WTC11 (cell line): ENCODE measurements at regions of chr1 and their contacts with region 1.

Region 1: DNA sequence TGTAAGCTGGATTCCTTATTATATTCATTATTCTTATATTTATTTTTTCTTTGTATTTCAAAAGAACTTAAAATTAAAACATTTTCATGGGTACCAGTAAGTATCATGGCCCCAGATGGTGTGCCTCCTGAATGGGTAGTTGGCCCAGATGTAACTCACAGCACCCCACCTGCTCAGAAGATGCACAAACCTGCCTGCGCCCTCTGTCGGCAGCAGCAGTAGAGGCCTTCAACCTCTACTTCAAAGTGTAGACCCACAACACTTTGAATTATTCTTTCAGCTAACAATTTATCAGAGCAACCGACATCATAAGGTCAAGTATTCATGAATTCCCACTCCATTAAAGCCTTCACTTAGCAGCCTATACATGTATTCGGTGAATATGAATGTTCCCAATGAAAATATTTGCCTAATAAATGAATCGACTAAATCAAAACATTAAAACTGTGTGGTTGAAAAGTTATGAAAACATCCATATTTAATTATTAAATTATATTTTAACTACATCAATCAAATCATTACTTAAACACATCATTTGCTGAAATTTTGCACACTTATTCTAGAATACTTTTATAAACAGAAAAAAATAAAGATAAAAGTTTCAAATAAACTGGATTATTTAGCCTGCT is 25.4 kb downstream of the PIGM start:
- DNase-seq: peak; percentile 86
- ATAC-seq: peak; percentile 95
- H3K4me3 Mint-ChIP-seq: no peak overlapping the region
- H3K27ac Mint-ChIP-seq: no peak overlapping the region
- H3K4me1 Mint-ChIP-seq: no peaks in the 10 kb centered on the region
- H3K27me3 Mint-ChIP-seq: peaks cover 8% of the 10 kb centered on the region; the same call in 1 of the 2 replicates
- CTCF ChIP-seq: peak; percentile 93

Region 2: DNA sequence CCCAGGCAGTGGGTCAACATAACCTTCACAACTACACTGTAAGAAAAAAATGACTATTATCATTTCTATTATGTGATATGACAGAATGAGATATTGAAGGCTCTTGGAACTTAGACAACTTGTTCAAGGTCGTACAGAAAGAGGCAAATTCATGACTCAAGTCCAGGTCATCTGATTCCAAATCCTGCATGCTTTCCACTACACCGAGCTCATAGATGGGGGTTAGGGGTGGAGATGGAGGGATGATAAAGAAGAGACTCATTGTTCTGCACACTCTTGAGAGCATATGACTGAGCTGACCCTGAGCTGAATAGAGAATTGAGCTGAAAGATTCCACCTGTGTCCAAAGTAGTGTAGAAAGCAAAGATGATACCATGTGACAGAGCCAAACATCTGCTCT is 201.5 kb before region 1 on chr1:
- CTCF ChIA-PET with region 1: interaction called, 77 read pairs
- POLR2A ChIA-PET with region 1: no interaction called
- DNase-seq: no peak
- ATAC-seq: no peak
- H3K4me3 Mint-ChIP-seq: no peak overlapping the region
- H3K27ac Mint-ChIP-seq: no peak overlapping the region
- H3K4me1 Mint-ChIP-seq: no peaks in the 10 kb centered on the region
- H3K27me3 Mint-ChIP-seq: peaks cover 6% of the 10 kb centered on the region
- CTCF ChIP-seq: no peak

Region 3: DNA sequence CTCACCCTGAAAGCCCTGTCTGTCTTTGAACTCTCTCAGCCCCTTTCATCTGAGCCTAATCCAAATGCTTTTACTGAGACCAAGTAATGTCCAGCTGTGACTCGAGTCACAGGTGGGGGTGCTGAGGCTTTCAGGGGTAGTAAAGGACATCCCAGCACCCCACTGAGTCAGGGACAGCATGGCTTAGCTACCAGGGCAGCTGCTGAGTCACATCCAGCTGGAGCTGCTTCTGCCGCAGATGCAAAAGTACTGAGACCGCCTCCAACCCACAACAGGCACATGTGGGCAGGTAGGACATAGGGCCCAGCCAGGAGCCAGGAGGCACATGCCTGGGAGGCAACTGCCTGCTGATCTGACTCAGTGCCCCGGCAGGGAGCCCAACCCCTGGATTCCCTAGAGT is 137.3 kb before region 1 on chr1:
- CTCF ChIA-PET with region 1: interaction called, 15 read pairs
- POLR2A ChIA-PET with region 1: no interaction called
- DNase-seq: no peak
- ATAC-seq: no peak
- H3K4me3 Mint-ChIP-seq: no peak overlapping the region
- H3K27ac Mint-ChIP-seq: no peak overlapping the region
- H3K4me1 Mint-ChIP-seq: peaks cover 4% of the 10 kb centered on the region
- H3K27me3 Mint-ChIP-seq: no peaks in the 10 kb centered on the region; the same call in 1 of the 2 replicates
- CTCF ChIP-seq: no peak

Region 4: DNA sequence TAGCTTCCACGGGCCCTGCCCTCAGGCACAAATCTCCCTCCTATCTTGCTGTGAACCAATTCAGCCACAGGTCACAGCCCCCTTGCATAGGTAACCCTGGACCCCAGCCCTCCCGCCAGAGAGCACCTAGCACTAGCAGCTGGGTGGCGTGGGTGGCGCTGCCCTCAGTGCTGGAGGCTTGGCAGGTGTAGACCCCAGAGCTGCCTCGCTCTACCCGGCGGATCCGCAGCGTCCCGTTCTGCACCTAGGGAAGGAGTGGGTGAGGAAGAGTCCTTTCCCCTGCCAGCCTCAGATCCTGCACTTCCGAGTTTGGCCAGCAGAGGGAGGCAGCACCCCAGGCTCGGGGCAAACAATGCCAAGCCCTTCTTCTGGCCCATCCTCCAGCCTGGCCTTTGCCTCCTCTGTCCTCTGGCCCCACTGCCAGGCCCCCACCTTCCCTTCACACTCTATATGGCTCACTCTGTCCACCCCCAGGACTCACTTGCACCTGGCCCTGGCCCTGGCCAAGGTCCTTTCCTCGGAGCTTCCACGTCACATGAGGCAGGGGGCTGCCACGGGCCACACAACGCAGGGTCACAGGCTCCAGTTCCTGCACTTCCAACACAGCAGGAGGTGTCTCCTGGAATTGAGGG is 70.0 kb before region 1 on chr1:
- CTCF ChIA-PET with region 1: interaction called, 202 read pairs
- POLR2A ChIA-PET with region 1: no interaction called
- DNase-seq: peak; percentile 94
- ATAC-seq: peak; percentile 80
- H3K4me3 Mint-ChIP-seq: no peak overlapping the region
- H3K27ac Mint-ChIP-seq: no peak overlapping the region
- H3K4me1 Mint-ChIP-seq: peaks cover 28% of the 10 kb centered on the region
- H3K27me3 Mint-ChIP-seq: no peaks in the 10 kb centered on the region
- CTCF ChIP-seq: peak; percentile 97

Region 5: DNA sequence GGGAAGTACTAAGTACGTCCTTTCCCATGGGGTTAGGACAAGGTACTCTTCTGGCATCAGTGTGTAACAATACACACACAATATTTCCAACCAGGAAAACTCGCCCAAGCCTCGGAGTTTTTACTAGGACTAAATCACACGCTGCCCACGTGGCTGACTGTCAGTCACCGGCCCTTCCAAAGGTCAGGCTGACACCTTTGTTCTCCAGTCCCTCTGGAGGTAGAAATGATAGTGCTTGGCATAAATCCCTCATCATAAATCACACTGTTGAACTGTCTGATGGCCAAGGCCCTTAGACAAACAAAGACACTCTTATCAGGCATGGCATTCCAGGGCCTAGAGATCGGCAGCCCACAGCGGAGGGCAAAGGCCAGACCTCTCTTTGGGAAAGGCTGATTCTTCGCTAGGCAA is 35.5 kb before region 1 on chr1:
- CTCF ChIA-PET with region 1: interaction called, 25 read pairs
- POLR2A ChIA-PET with region 1: no interaction called
- DNase-seq: no peak
- ATAC-seq: no peak
- H3K4me3 Mint-ChIP-seq: no peak overlapping the region
- H3K27ac Mint-ChIP-seq: no peak overlapping the region
- H3K4me1 Mint-ChIP-seq: no peaks in the 10 kb centered on the region
- H3K27me3 Mint-ChIP-seq: no peaks in the 10 kb centered on the region; the same call in 1 of the 2 replicates
- CTCF ChIP-seq: no peak

Region 6: DNA sequence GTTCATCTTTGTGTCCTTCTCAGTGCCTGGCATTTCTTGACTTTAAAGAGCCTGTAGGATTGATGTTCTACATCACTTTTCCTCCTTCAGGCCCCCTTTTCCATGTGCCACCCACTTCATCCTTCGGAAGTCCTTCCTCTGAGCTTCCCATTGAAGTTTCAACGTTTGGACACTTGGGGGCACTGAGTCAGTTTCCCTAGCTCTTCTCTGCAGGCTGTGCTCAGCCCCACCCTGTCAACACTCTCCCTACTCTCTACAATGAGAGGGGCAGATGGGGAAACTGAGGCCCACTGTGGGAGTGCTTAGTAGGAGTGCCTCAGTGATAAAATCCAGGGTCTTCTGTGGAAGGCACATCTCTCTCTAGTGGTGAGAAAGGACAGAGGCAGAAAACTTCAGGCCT is 51.7 kb after region 1 on chr1:
- CTCF ChIA-PET with region 1: interaction called, 10 read pairs
- POLR2A ChIA-PET with region 1: no interaction called
- DNase-seq: no peak
- ATAC-seq: peak; percentile 53
- H3K4me3 Mint-ChIP-seq: no peak overlapping the region
- H3K27ac Mint-ChIP-seq: no peak overlapping the region
- H3K4me1 Mint-ChIP-seq: peaks cover 18% of the 10 kb centered on the region
- H3K27me3 Mint-ChIP-seq: peaks cover 7% of the 10 kb centered on the region
- CTCF ChIP-seq: no peak